Mucosa of descending colon (tissue), 3 donors: ENCODE measurements at regions of chr10 and their contacts with region 1.

Region 1: GRCh38 chr10:93288654-93289634 is 193.2 kb downstream of the MYOF start:
- DNase-seq: peak in 2 of 3 donors; percentile 65 to 84
- ATAC-seq: peak; percentile 89
- H3K4me3 ChIP-seq: no peak overlapping the region
- H3K4me1 ChIP-seq: no peaks in the 10 kb centered on the region
- CTCF ChIP-seq: peak; percentile 59

Region 2: DNA sequence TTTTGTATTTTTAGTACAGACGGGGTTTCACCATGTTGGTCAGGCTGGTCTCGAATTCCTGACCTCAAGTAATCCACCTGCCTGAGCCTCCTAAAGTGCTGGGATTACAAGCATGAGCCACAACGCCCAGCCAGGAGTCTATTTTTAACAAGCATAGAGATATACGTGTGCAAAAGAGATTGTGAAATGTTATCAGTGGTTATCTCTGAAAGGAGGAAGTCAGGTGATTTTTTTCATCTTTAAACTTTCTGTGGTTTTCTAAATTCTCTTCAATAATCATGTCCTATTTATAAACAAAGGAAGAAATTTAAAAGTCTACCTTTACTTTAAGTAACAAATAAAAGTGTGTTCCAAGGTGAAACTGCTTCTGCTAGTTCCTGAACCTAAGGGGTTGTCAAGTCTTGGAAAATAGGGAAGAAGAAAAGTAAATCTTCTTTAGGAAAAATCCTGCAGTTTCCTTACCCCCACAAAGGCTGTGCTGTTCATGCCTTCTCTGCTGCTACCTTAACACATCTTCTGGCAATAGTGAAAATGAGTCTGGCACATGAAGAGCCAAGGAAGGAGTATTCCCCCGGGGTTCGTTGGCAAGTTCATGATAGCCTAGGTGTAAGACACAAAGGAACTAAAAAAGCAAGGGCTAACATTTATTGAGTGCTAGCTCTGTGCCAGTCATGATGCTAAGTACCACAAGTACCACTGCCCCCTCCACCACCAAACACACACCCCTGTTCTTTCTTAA is 164.2 kb before region 1 on chr10:
- intact Hi-C with region 1: loop called in 1 of 2 experiments (anchors 5 kb)
- DNase-seq: peak in 1 of 3 donors; percentile 53
- ATAC-seq: peak; percentile 74
- H3K4me3 ChIP-seq: no peak overlapping the region
- H3K4me1 ChIP-seq: peaks cover 12% of the 10 kb centered on the region
- CTCF ChIP-seq: no peak